ENCODE measurements at regions of chr5 and their contacts with region 1.

Region 1: GRCh38 chr5:154520861-154521453 is 42.9 kb upstream of the HAND1 start:
- DNase-seq: no peak
- H3K4me3 ChIP-seq: peak overlapping the region in 1 of 3 experiments; percentile 23
- H3K27ac ChIP-seq: no peak overlapping the region
- H3K4me1 ChIP-seq: peaks cover 15% of the 10 kb centered on the region
- H3K27me3 ChIP-seq: no peaks in the 10 kb centered on the region
- CTCF ChIP-seq: peak; percentile 67 to 87

Region 2: GRCh38 chr5:153601377-153601776 is 919.6 kb before region 1 on chr5:
- CTCF ChIA-PET with region 1: no interaction called
- dilution Hi-C with region 1: no loop called
- in situ Hi-C with region 1: no loop called
- intact Hi-C with region 1: no loop called
- DNase-seq: no peak
- H3K4me3 ChIP-seq: no peak overlapping the region
- H3K27ac ChIP-seq: no peak overlapping the region
- H3K4me1 ChIP-seq: no peaks in the 10 kb centered on the region
- H3K27me3 ChIP-seq: no peaks in the 10 kb centered on the region
- CTCF ChIP-seq: no peak

Region 3: DNA sequence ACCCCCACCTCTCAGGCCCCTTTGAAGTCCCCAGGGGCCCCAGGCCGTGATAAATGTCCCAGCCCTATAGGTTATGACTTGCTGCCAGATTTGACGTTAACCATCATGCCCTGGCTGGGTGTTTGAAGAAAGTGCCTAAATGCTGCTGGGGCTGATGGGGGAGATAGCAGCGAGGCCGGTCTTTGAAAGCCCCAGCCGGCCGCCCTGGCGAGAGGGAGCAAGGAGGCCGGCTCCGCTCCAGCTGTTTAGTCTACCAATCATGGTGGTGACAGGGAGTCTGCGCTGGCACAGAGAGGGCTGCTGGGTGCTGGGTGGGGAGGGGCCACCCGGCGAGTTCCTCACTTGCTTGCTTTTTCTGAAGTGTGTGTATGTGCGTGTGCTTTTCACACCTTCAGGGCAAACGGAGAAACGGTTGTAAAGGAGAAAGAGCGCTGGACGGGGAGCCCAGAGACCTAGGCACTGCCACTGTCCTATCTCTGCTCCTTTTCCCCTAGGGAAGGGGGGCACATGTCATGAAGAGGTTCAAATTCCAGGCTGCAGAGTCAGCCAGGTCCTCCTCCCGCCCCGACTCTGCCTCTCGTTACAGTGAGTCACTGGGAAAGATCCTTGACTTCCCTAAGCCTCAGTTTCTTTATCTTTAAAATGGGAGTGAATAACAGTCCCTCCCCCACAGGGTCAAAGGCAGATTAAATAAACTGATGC is 83.2 kb after region 1 on chr5:
- CTCF ChIA-PET with region 1: interaction called, 3 read pairs
- dilution Hi-C with region 1: no loop called
- in situ Hi-C with region 1: loop called in 1 of 2 experiments (anchors 10 kb)
- intact Hi-C with region 1: no loop called
- DNase-seq: no peak
- H3K4me3 ChIP-seq: no peak overlapping the region
- H3K27ac ChIP-seq: no peak overlapping the region
- H3K4me1 ChIP-seq: peaks cover 8% of the 10 kb centered on the region
- H3K27me3 ChIP-seq: no peaks in the 10 kb centered on the region
- CTCF ChIP-seq: no peak

Measured in mammary epithelial cell (primary cell).